Posterior vena cava (tissue), 2 donors: ENCODE measurements at regions of chr1 and their contacts with region 1.

Region 1: GRCh38 chr1:51518033-51518585 is 957 bp downstream of the EPS15 start:
- DNase-seq: peak; percentile 83

Region 2: DNA sequence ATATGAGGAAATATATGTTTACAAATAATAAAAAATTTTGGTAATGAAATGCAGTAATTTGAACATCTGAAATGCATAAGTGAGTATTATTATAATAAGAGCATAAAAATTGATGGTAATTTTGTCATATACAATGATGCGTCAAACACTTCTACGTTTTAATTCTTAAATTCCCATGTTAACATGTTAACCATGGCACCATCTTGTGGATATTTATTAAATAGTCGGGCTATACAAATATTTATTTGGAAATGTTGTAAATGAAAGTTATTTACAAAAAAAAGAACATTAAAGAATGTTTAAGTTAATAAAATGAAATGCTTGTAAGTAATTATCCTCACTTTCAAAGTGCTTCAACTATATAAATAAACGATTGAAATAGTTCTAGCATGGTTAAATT is 473.3 kb before region 1 on chr1:
- intact Hi-C with region 1: no loop called
- DNase-seq: no peak

Region 3: GRCh38 chr1:51499694-51500093 is 18.4 kb before region 1 on chr1:
- intact Hi-C with region 1: loop called in 1 of 2 experiments (anchors 1 kb)
- DNase-seq: no peak

Region 4: DNA sequence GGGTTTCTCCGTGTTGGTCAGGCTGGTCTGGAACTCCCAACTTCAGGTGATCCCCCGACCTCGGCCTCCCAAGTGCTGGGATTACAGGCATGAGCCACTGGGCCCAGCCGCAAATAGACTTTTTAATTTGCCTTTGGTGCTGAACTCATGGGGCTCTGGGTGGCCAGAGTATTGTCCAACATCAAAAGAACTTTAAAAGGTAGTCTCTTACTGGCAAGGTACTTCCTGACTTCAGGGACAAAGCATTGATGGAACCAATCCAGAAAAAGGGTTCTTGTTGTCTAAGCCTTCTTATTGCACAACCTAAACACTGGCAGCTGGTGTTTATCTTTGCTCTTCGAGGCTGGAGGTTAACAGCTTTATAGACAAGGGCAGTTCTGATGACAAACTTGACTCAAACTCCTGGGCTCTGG is 519.3 kb after region 1 on chr1:
- intact Hi-C with region 1: no loop called
- DNase-seq: no peak